GM12878 (cell line): ENCODE measurements at regions of chr18 and their contacts with region 1.

Region 1: DNA sequence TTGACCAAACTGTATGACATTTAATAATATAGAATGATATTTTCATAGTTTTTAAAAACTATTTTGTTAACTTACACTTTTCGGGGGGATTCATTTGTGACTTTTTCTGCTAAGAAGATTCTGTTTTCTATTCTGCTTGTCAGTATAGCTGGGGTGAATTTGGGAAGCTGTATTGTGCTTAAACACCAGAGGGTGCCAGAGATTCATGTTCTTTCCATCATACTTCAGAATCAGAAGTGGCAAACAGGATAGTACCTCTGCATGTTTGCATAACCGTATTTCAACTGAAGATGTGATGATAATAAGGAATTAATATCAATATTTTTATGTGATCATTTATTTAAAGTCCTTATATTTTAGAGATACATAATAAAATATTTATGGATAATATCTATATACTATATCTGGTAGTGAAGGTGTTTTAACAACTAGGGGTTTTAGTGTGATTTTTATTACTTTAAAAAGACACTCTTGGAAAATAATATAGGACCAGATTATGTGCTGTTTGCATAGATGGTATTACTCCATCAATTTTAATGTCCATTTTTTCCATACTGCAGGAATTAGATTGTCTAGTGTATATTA is 81.0 kb downstream of the TAF4B start:
- DNase-seq: peak; percentile 24
- ATAC-seq: peak; percentile 92
- H3K4me3 ChIP-seq: no peak overlapping the region
- H3K27ac ChIP-seq: no peak overlapping the region
- H3K4me1 ChIP-seq: no peaks in the 10 kb centered on the region
- H3K27me3 ChIP-seq: no peaks in the 10 kb centered on the region
- CTCF ChIP-seq: peak; percentile 65 to 72 (median 69)
- EP300 ChIP-seq: no peak
- POLR2A ChIP-seq: no peak
- RAD21 ChIP-seq: peak; percentile 90

Region 2: DNA sequence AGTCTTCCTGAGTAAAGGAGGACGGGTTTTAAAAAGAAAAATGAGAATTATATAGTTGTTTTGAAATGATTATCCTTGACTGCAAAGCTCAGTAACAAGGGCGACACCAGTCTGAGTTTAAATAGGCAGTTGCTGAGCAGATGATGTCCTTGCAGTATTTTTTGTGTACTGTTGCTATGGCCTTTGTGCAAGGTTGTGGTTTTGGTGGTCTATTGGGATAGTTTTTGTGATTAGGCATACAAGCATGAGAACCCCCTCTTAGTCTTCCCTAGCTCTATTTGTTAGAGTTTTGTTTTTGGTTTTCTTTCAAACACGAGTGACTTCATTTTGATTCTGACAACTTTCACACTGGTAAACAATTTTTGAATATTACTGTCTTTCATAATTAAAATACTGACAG is 16.9 kb before region 1 on chr18:
- CTCF ChIA-PET with region 1: interaction called, 11 read pairs
- POLR2A ChIA-PET with region 1: no interaction called
- RAD21 ChIA-PET with region 1: interaction called, 3 read pairs
- SMC1A ChIA-PET with region 1: interaction called, 5 read pairs
- in situ Hi-C with region 1: no loop called
- intact Hi-C with region 1: no loop called
- DNase-seq: no peak
- ATAC-seq: peak; percentile 78
- H3K4me3 ChIP-seq: no peak overlapping the region
- H3K27ac ChIP-seq: no peak overlapping the region
- H3K4me1 ChIP-seq: no peaks in the 10 kb centered on the region
- H3K27me3 ChIP-seq: no peaks in the 10 kb centered on the region
- CTCF ChIP-seq: no peak
- EP300 ChIP-seq: no peak
- POLR2A ChIP-seq: no peak
- RAD21 ChIP-seq: no peak

Region 3: GRCh38 chr18:26526128-26526965 is 219.1 kb after region 1 on chr18:
- CTCF ChIA-PET with region 1: interaction called, 3 read pairs
- POLR2A ChIA-PET with region 1: interaction called, 10 read pairs
- RAD21 ChIA-PET with region 1: no interaction called
- SMC1A ChIA-PET with region 1: no interaction called
- in situ Hi-C with region 1: no loop called
- intact Hi-C with region 1: no loop called
- DNase-seq: no peak
- ATAC-seq: no peak
- H3K4me3 ChIP-seq: no peak overlapping the region
- H3K27ac ChIP-seq: no peak overlapping the region
- H3K4me1 ChIP-seq: no peaks in the 10 kb centered on the region
- H3K27me3 ChIP-seq: no peaks in the 10 kb centered on the region
- CTCF ChIP-seq: no peak
- EP300 ChIP-seq: no peak
- POLR2A ChIP-seq: no peak
- RAD21 ChIP-seq: no peak

Region 4: GRCh38 chr18:26574958-26575864 is 267.9 kb after region 1 on chr18:
- CTCF ChIA-PET with region 1: no interaction called
- POLR2A ChIA-PET with region 1: no interaction called
- RAD21 ChIA-PET with region 1: no interaction called
- SMC1A ChIA-PET with region 1: no interaction called
- in situ Hi-C with region 1: no loop called
- intact Hi-C with region 1: loop called (anchors 5 kb)
- DNase-seq: no peak
- ATAC-seq: peak; percentile 48
- H3K4me3 ChIP-seq: peak overlapping the region; percentile 7; the same call in 1 of the 2 replicates
- H3K27ac ChIP-seq: no peak overlapping the region
- H3K4me1 ChIP-seq: peaks cover 5% of the 10 kb centered on the region; the same call in 1 of the 2 replicates
- H3K27me3 ChIP-seq: no peaks in the 10 kb centered on the region; a peak in 1 of 4 replicates
- CTCF ChIP-seq: no peak
- EP300 ChIP-seq: no peak
- POLR2A ChIP-seq: no peak
- RAD21 ChIP-seq: no peak

Region 5: GRCh38 chr18:26978812-26979341 is 671.6 kb after region 1 on chr18:
- CTCF ChIA-PET with region 1: no interaction called
- POLR2A ChIA-PET with region 1: no interaction called
- RAD21 ChIA-PET with region 1: no interaction called
- SMC1A ChIA-PET with region 1: no interaction called
- in situ Hi-C with region 1: loop called (anchors 25 kb)
- intact Hi-C with region 1: no loop called
- DNase-seq: peak; percentile 76
- ATAC-seq: peak; percentile 99
- H3K4me3 ChIP-seq: peak overlapping the region; percentile 82; the same call in 1 of the 2 replicates
- H3K27ac ChIP-seq: peak overlapping the region; percentile 81
- H3K4me1 ChIP-seq: peaks cover 8% of the 10 kb centered on the region; the same call in 1 of the 2 replicates
- H3K27me3 ChIP-seq: no peaks in the 10 kb centered on the region
- CTCF ChIP-seq: no peak
- EP300 ChIP-seq: peak in 1 of 2 experiments; percentile 55; a peak in 1 of 4 replicates
- POLR2A ChIP-seq: peak; percentile 43
- RAD21 ChIP-seq: no peak